HepG2 (cell line): ENCODE measurements at regions of chr18 and their contacts with region 1.

Region 1: GRCh38 chr18:67300498-67300897 is 216.0 kb downstream of the DSEL start:
- DNase-seq: no peak
- ATAC-seq: no peak
- H3K4me3 ChIP-seq: no peak overlapping the region
- H3K27ac ChIP-seq: no peak overlapping the region
- H3K4me1 ChIP-seq: no peaks in the 10 kb centered on the region
- H3K27me3 ChIP-seq: no peaks in the 10 kb centered on the region
- CTCF ChIP-seq: no peak
- EP300 ChIP-seq: no peak
- POLR2A ChIP-seq: no peak
- RAD21 ChIP-seq: no peak

Region 2: DNA sequence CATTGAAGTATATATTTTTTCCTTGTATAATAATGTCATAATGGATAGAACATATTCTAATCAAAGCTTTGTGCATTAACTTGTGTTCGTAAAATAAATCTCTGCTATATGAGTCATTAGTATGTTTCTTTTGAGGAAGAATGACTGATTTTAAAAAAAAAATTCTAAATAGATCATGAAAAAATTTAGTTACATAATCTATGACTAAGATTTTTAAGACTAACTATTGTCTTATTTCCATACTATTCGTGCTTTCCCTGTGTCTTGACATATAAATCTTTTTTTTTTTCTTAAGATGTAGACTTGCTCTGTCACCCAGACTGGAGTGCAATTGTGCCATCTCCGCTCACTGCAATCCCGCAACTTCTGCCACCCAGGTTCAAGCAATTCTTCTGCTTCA is 10.1 kb before region 1 on chr18:
- CTCF ChIA-PET with region 1: no interaction called
- POLR2A ChIA-PET with region 1: no interaction called
- in situ Hi-C with region 1: no loop called
- intact Hi-C with region 1: loop called (anchors 1 kb)
- DNase-seq: no peak
- ATAC-seq: no peak
- H3K4me3 ChIP-seq: no peak overlapping the region
- H3K27ac ChIP-seq: no peak overlapping the region
- H3K4me1 ChIP-seq: no peaks in the 10 kb centered on the region
- H3K27me3 ChIP-seq: no peaks in the 10 kb centered on the region; a peak in 1 of 5 replicates
- CTCF ChIP-seq: no peak
- EP300 ChIP-seq: no peak
- POLR2A ChIP-seq: no peak
- RAD21 ChIP-seq: no peak